Sciatic nerve (tissue), 2 donors: ENCODE measurements at regions of chr11 and their contacts with region 1.

Region 1: GRCh38 chr11:42777776-42778175 is 534.0 kb upstream of the API5 start:
- DNase-seq: no peak
- ATAC-seq: no peak

Region 2: DNA sequence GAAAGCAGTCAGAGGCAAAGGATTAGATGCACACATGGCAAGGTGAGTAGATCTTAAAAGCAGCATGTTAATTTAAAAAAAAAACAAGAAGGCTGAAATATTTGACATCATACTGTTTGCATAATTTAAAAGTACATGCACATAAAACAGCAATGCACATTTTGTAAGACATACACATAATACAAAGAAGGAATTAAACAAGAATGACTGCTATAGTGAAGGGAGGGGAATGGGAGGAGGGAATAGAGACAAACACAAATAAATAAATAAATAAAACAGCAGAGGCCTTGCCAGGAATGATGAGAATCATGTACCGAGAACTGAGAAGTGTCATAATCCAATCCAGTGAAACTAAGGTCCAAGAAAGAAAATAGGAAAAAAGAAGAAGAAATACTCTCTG is 47.8 kb after region 1 on chr11:
- intact Hi-C with region 1: loop called (anchors 2 kb)
- DNase-seq: no peak
- ATAC-seq: no peak

Region 3: GRCh38 chr11:42974505-42975504 is 197.0 kb after region 1 on chr11:
- intact Hi-C with region 1: no loop called
- DNase-seq: no peak
- ATAC-seq: no peak